ENCODE measurements at regions of chr1 and their contacts with region 1.

Region 1: GRCh38 chr1:145918144-145918992 is at the start of gene PEX11B:
- DNase-seq: peak; percentile 95 to 98 (median 95)
- H3K4me3 ChIP-seq: peak within 1 kb of the TSS; percentile 70 to 98 (median 88)
- H3K4me3 Mint-ChIP-seq: peak within 1 kb of the TSS; percentile 88 to 93
- H3K27ac ChIP-seq: peak within 1 kb of the TSS; percentile 74 to 82
- H3K27ac Mint-ChIP-seq: peak within 1 kb of the TSS; percentile 89 to 97 (median 96)
- H3K4me1 ChIP-seq: peaks cover 27 to 39% of the 10 kb centered on the region in 2 donors
- H3K4me1 Mint-ChIP-seq: peaks cover 41% of the 10 kb centered on the region
- H3K27me3 ChIP-seq: no peaks in the 10 kb centered on the region
- H3K27me3 Mint-ChIP-seq: peaks cover 0 to 3% (median 3%) of the 10 kb centered on the region in 3 donors
- CTCF ChIP-seq: no peak
- polyA plus RNA-seq, gene PEX11B: 12.0 to 38.2 (median 37.9) TPM

Region 2: DNA sequence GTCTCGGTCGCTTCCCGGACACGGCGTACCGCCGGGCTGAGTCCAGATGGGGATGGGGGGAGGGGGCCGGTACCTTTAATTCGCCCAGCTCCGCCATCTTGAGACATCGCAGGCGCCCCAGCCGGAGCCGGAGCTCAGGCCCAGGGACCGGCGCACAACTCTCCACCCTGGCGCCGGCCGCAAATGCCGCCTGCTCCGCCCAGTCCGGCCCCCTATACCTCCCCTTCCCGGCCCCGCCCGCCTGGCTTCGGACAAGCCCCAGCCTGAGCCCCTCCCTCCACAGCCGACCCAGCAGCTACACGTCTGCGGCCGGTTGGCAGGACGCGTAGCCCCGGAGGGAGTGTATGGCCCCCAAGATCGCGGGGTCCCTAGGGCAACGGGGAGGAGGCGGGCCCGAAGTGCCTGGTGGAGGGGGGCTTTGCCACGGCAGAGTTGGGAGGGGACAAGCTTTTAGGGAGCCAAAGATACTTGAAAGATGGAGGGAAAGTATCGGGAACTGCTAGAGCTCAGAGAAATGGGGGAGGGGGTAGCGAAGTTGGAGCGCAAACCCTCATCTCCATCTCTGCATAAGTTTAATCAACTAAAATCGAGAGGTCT is 59.4 kb before region 1 on chr1 and contains the start of gene PIAS3:
- intact Hi-C with region 1: loop called in 1 of 2 experiments (anchors 5 kb)
- DNase-seq: peak; percentile 79 to 84 (median 80)
- H3K4me3 ChIP-seq: peak within 1 kb of the TSS; percentile 94 to 99 (median 99)
- H3K4me3 Mint-ChIP-seq: peak within 1 kb of the TSS; percentile 97 to 98
- H3K27ac ChIP-seq: peak within 1 kb of the TSS; percentile 70 to 85
- H3K27ac Mint-ChIP-seq: peak within 1 kb of the TSS; percentile 87 to 95 (median 93)
- H3K4me1 ChIP-seq: peaks cover 13 to 18% of the 10 kb centered on the region in 2 donors
- H3K4me1 Mint-ChIP-seq: peaks cover 14% of the 10 kb centered on the region
- H3K27me3 ChIP-seq: no peaks in the 10 kb centered on the region
- H3K27me3 Mint-ChIP-seq: peaks cover 0 to 4% (median 2%) of the 10 kb centered on the region in 3 donors
- CTCF ChIP-seq: no peak
- polyA plus RNA-seq, gene PIAS3: 7.2 to 25.9 (median 8.8) TPM

Region 3: DNA sequence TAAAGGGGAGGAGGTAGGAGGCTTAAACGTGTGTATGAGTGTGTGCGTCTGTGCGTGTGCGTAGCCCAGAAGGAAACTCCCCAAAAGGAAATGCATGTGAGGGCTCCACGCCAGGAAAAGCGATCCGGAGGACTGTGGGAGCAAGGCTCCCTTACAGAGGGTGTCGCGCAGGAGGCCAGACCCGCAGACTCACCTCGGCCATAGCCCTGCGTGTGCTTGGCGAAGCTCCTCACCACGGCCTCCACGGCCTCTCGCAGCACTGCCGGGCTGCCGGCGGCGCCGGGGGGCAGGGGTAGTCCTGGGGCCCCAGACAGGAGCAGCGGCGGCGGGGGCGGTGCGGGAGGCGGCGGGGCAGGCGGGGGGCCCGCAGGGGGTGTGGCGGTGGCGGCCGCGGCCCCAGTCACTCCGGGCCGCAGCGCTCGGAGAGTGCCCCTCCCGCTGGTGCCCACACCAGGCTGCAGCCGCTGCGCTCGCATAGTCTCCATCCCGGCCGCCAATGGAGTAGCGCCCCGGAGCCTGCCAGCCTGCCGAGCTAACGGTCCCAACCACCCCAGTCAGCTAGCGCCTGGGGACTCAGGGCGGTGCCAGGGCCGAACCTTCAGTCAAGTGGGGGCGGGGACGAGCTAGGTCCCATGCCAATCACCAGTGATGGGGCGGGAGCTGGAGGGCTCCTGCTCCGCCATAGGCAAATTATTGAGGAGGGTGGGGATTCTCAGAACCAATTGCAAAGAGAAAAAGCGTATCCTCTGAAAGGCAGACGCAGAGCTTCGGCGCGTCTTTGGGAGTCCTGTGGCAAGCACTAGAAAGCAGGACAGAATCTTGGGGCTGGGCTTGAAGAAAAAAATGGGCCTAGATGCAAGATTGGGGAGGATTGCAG is 39.3 kb after region 1 on chr1 and contains the start of gene LIX1L:
- intact Hi-C with region 1: loop called (anchors 2 to 5 kb)
- DNase-seq: peak; percentile 91 to 94 (median 92)
- H3K4me3 ChIP-seq: peak within 1 kb of the TSS; percentile 47 to 87 (median 78)
- H3K4me3 Mint-ChIP-seq: peak within 1 kb of the TSS; percentile 89 to 95
- H3K27ac ChIP-seq: peak within 1 kb of the TSS; percentile 44 to 88
- H3K27ac Mint-ChIP-seq: peak within 1 kb of the TSS; percentile 81 to 92 (median 90)
- H3K4me1 ChIP-seq: peaks cover 55 to 66% of the 10 kb centered on the region in 2 donors
- H3K4me1 Mint-ChIP-seq: peaks cover 76% of the 10 kb centered on the region
- H3K27me3 ChIP-seq: peaks cover 3 to 22% of the 10 kb centered on the region in 2 donors
- H3K27me3 Mint-ChIP-seq: peaks cover 24 to 29% (median 25%) of the 10 kb centered on the region in 3 donors
- CTCF ChIP-seq: no peak
- polyA plus RNA-seq, gene LIX1L: 6.3 to 13.6 (median 8.5) TPM

Region 4: DNA sequence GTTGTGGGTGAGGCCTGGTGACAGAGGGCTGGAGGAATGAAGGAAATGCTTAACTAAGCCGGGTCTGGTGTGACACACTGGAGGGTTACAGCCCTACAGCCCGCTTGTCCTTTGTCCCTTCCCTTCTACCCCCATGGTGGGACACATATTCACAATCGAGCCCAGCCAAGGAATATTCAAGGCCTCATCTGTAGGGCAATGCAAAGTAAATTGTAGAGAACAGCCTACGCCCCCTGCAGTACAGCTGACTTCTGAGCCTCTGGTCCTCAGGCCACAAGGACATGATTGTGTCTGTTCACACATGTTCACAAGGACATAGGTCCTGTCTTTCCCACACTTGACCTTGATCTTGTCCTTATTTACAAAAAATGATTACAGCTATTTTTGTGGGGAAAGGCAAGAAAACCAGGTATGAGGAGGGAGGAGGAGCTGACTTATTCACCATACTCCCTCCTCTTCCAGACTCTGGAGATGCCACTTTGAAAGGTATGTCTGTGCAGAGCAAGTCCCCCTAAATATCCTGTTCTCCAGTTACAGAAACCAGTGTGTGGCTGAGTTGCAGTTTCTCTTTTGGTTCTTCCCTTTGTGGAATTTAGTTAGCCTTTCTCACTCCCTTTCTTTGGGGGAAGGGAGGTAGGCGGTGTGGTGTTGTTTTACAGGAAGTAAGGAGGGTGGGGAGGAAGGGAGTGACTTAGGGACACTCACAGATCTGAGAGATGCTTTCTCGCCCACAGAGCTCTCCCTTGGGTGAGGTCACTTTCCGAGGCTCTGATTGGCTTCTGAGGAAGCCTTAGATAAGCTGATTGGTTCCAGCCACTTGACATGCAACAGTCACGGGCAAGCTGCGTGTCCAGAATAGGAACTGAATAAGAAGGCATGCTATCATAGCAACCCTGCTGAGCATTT is 60.7 kb after region 1 on chr1:
- intact Hi-C with region 1: loop called in 1 of 2 experiments (anchors 5 kb)
- DNase-seq: peak; percentile 98 to 100 (median 100)
- H3K4me3 ChIP-seq: peak overlapping the region; percentile 26 to 74 (median 69)
- H3K4me3 Mint-ChIP-seq: no peak overlapping the region
- H3K27ac ChIP-seq: peak overlapping the region; percentile 85 to 99
- H3K27ac Mint-ChIP-seq: no peak overlapping the region
- H3K4me1 ChIP-seq: peaks cover 55 to 71% of the 10 kb centered on the region in 2 donors
- H3K4me1 Mint-ChIP-seq: peaks cover 29% of the 10 kb centered on the region
- H3K27me3 ChIP-seq: no peaks in the 10 kb centered on the region
- H3K27me3 Mint-ChIP-seq: peaks cover 0 to 2% (median 0%) of the 10 kb centered on the region in 3 donors
- CTCF ChIP-seq: peak; percentile 22

Measured in CD14-positive monocyte (primary cell).